Naive thymus-derived CD8-positive, alpha-beta T cell (primary cell): ENCODE measurements at regions of chr15 and their contacts with region 1.

Region 1: GRCh38 chr15:78077058-78077877 is at the start of gene TBC1D2B:
- DNase-seq: peak; percentile 53 to 83 (median 68)
- ATAC-seq: peak; percentile 82 to 89
- H3K4me3 Mint-ChIP-seq: peak within 1 kb of the TSS; percentile 95 to 100 (median 98)
- H3K27ac Mint-ChIP-seq: peak within 1 kb of the TSS; percentile 94 to 99 (median 96)
- H3K4me1 Mint-ChIP-seq: peaks cover 25 to 51% (median 49%) of the 10 kb centered on the region in 4 donors
- H3K27me3 Mint-ChIP-seq: no peaks in the 10 kb centered on the region
- polyA plus RNA-seq, gene TBC1D2B: 8.1 to 14.0 (median 8.5) TPM

Region 2: GRCh38 chr15:78012643-78013077 is 64.6 kb before region 1 on chr15:
- POLR2A ChIA-PET with region 1: no interaction called
- DNase-seq: no peak
- ATAC-seq: no peak
- H3K4me3 Mint-ChIP-seq: no peak overlapping the region
- H3K27ac Mint-ChIP-seq: peak overlapping the region in 2 of 10 donors; percentile 7 to 17
- H3K4me1 Mint-ChIP-seq: peaks cover 0 to 8% (median 3%) of the 10 kb centered on the region in 4 donors
- H3K27me3 Mint-ChIP-seq: no peaks in the 10 kb centered on the region

Region 3: DNA sequence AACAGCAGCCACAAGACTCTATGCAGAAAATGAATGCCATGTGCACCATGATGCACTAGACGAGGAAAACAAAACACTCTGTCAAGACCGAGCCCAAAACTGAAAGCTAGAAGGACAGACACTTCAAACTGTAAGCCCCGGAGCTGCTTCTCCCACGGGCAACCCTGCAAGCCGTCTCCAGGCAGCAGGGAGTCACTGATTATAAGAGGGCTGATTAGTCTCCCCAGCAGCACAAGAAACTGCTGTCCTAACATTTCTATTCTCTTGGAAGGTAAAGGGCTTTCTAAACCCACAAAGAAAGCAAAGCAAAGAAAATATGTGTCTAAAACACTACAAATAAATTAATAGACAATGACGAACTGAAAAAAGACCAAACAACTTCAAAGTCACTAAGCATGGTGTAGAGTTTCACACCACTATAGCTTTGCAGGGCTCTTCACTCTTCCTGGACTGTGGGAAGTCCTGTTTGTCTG is 15.3 kb before region 1 on chr15:
- POLR2A ChIA-PET with region 1: interaction called, 250 read pairs
- DNase-seq: peak in 4 of 10 donors; percentile 31 to 56 (median 40)
- ATAC-seq: peak; percentile 79 to 86
- H3K4me3 Mint-ChIP-seq: peak overlapping the region; percentile 68 to 92 (median 80)
- H3K27ac Mint-ChIP-seq: peak overlapping the region in 9 of 10 donors; percentile 82 to 96 (median 94)
- H3K4me1 Mint-ChIP-seq: peaks cover 37 to 49% (median 47%) of the 10 kb centered on the region in 4 donors
- H3K27me3 Mint-ChIP-seq: no peaks in the 10 kb centered on the region

Region 4: DNA sequence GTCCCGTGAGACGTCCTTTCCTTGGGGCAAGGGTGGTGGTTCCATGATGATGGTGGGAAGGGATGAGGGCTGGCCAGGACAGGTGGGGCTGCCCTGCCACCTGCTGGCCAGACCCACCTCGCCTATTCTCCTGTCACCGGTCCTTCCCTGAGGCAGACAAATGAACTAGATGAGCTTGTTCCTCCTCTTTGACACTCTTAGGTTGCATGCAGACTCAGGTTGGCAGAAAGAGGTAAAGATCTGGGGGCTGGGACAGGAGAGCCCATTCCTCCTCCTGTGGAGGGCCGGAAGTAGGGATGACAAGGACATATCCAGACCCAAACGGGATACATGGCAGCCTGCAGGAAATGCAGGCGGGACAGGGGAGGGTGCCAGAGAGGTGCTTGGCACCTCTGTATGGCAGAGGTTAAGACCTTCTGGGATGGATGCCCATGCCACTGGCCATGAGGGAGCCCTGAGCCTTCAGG is 118.5 kb after region 1 on chr15:
- POLR2A ChIA-PET with region 1: no interaction called
- DNase-seq: peak in 9 of 10 donors; percentile 16 to 57 (median 43)
- ATAC-seq: peak; percentile 77 to 95
- H3K4me3 Mint-ChIP-seq: no peak overlapping the region
- H3K27ac Mint-ChIP-seq: peak overlapping the region in 2 of 10 donors; percentile 28 to 58
- H3K4me1 Mint-ChIP-seq: peaks cover 0 to 8% (median 2%) of the 10 kb centered on the region in 4 donors
- H3K27me3 Mint-ChIP-seq: peaks cover 0 to under 1% (median 0%) of the 10 kb centered on the region in 5 donors